Activated CD4-positive, alpha-beta T cell treated with anti-CD3 and anti-CD28 coated beads for 36 hours (primary cell): ENCODE measurements at regions of chr1 and their contacts with region 1.

Region 1: GRCh38 chr1:12434174-12434573 is 183.8 kb downstream of the DHRS3 start:
- DNase-seq: peak; percentile 82
- ATAC-seq: peak; percentile 48
- H3K4me3 Mint-ChIP-seq: no peak overlapping the region
- H3K27ac Mint-ChIP-seq: peak overlapping the region; percentile 14
- H3K4me1 Mint-ChIP-seq: peaks cover 63% of the 10 kb centered on the region
- H3K27me3 Mint-ChIP-seq: no peaks in the 10 kb centered on the region

Region 2: GRCh38 chr1:12161662-12162458 is 272.3 kb before region 1 on chr1:
- CTCF ChIA-PET with region 1: no interaction called
- POLR2A ChIA-PET with region 1: no interaction called
- intact Hi-C with region 1: loop called in 1 of 2 experiments (anchors 1 kb)
- DNase-seq: peak; percentile 89
- ATAC-seq: peak; percentile 84
- H3K4me3 Mint-ChIP-seq: peak overlapping the region; percentile 15
- H3K27ac Mint-ChIP-seq: peak overlapping the region; percentile 91
- H3K4me1 Mint-ChIP-seq: peaks cover 73% of the 10 kb centered on the region
- H3K27me3 Mint-ChIP-seq: no peaks in the 10 kb centered on the region

Region 3: DNA sequence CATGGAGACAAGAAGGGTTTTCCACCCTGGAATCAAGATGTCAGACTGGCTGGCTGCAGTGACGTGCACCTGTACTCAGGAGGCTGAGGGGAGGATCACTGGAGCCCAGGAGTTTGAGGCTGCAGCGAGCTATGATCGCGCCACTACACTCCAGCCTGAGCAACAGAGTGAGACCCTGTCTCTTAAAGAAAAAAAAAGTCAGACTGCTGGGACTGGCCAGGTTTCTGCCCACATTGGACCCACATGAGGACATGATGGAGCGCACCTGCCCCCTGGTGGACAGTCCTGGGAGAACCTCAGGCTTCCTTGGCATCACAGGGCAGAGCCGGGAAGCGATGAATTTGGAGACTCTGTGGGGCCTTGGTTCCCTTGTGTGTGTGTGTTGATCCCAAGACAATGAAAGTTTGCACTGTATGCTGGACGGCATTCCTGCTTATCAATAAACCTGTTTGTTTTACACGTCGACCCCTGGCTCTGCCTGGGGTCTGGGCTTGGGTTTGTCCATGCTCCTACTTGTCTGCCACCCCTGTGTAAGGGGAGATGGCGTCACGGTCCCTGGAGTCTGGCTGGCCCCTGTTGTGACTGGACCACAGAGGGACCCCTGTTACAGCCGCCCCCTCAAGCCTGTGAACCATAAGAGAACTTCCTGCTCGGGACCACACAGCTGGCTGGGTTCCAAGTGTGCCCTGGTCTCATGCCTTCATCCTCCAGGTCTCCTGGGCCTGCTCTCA is 225.2 kb before region 1 on chr1:
- CTCF ChIA-PET with region 1: no interaction called
- POLR2A ChIA-PET with region 1: no interaction called
- intact Hi-C with region 1: no loop called
- DNase-seq: peak; percentile 93
- ATAC-seq: peak; percentile 68
- H3K4me3 Mint-ChIP-seq: no peak overlapping the region
- H3K27ac Mint-ChIP-seq: peak overlapping the region; percentile 17
- H3K4me1 Mint-ChIP-seq: peaks cover 47% of the 10 kb centered on the region
- H3K27me3 Mint-ChIP-seq: no peaks in the 10 kb centered on the region

Region 4: DNA sequence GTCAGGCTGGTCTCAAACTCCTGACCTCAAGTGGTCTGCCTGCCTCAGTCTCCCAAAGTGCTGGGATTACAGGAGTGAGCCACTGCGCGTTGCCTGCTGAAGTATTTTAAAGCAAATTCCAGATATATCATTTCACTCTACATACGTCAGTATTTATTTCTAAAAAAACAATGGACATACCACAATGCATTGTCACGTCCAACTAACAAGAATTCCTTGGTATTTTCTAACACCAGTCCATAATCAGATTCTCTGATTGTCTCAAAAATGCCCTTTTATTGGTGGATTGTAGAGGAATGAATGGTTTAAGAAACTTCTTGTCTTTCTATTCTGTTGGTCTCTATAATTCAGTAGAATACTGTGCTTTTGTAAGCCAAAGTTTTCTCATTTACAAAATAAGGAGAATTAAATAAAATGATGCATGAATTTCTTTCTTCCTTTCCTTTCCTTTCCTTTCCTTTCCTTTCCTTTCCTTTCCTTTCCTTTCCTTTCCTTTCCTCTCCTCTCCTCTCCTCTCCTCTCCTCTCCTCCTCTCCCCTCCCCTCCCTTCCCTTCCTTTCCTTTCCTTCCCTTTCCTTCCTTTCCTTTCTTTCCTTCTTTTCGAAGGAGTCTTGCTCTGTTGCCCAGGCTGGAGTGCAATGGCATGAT is 148.6 kb before region 1 on chr1:
- CTCF ChIA-PET with region 1: no interaction called
- POLR2A ChIA-PET with region 1: no interaction called
- intact Hi-C with region 1: no loop called
- DNase-seq: no peak
- ATAC-seq: no peak
- H3K4me3 Mint-ChIP-seq: no peak overlapping the region
- H3K27ac Mint-ChIP-seq: no peak overlapping the region
- H3K4me1 Mint-ChIP-seq: peaks cover 10% of the 10 kb centered on the region
- H3K27me3 Mint-ChIP-seq: no peaks in the 10 kb centered on the region

Region 5: GRCh38 chr1:12407050-12407961 is 26.9 kb before region 1 on chr1:
- CTCF ChIA-PET with region 1: interaction called, 3 read pairs
- POLR2A ChIA-PET with region 1: no interaction called
- intact Hi-C with region 1: loop called (anchors 2 kb)
- DNase-seq: peak; percentile 23
- ATAC-seq: peak; percentile 78
- H3K4me3 Mint-ChIP-seq: no peak overlapping the region
- H3K27ac Mint-ChIP-seq: no peak overlapping the region
- H3K4me1 Mint-ChIP-seq: peaks cover 35% of the 10 kb centered on the region
- H3K27me3 Mint-ChIP-seq: no peaks in the 10 kb centered on the region

Region 6: DNA sequence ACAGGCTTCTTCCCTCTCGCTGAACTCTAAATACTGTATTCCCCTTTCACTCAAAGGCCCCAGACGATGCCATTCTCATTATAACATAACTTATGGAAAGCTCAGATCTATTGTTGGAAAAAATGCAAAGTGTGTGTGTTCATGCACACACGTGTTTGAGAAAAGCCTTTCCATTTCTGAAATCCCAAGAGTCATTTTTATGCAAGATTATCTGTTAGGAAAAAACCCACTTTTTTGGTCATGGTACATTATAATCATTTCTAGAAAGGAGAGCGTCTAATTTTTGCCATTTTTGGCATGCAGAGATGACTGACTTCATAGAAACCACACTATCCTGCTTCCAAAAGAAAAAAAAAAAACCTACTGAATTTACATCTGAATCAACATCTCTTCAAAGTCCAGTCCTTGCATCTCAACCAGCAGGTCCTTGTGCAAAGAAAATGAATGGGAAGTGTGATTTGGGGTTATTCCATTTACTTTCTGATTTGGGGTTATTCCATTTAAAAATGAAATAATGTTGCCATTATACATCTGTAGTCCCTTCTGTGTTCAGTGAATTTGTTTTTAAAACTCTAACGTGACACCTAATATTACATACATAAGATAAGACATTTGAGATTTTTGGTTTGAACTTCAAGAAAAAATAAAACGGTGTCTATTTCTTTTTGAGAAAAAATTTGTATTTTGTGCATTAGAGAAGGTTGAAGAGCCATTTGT is 33.6 kb after region 1 on chr1:
- CTCF ChIA-PET with region 1: interaction called, 4 read pairs
- POLR2A ChIA-PET with region 1: interaction called, 3 read pairs
- intact Hi-C with region 1: loop called in 1 of 2 experiments (anchors 1 kb)
- DNase-seq: no peak
- ATAC-seq: peak; percentile 73
- H3K4me3 Mint-ChIP-seq: no peak overlapping the region
- H3K27ac Mint-ChIP-seq: peak overlapping the region; percentile 89
- H3K4me1 Mint-ChIP-seq: peaks cover 51% of the 10 kb centered on the region
- H3K27me3 Mint-ChIP-seq: no peaks in the 10 kb centered on the region

Region 7: GRCh38 chr1:12511516-12512468 is 77.6 kb after region 1 on chr1:
- CTCF ChIA-PET with region 1: interaction called, 3 read pairs
- POLR2A ChIA-PET with region 1: interaction called, 3 read pairs
- intact Hi-C with region 1: loop called (anchors 1 to 2 kb)
- DNase-seq: no peak
- ATAC-seq: no peak
- H3K4me3 Mint-ChIP-seq: peak overlapping the region; percentile 58
- H3K27ac Mint-ChIP-seq: peak overlapping the region; percentile 99
- H3K4me1 Mint-ChIP-seq: peaks cover 54% of the 10 kb centered on the region
- H3K27me3 Mint-ChIP-seq: no peaks in the 10 kb centered on the region

Region 8: DNA sequence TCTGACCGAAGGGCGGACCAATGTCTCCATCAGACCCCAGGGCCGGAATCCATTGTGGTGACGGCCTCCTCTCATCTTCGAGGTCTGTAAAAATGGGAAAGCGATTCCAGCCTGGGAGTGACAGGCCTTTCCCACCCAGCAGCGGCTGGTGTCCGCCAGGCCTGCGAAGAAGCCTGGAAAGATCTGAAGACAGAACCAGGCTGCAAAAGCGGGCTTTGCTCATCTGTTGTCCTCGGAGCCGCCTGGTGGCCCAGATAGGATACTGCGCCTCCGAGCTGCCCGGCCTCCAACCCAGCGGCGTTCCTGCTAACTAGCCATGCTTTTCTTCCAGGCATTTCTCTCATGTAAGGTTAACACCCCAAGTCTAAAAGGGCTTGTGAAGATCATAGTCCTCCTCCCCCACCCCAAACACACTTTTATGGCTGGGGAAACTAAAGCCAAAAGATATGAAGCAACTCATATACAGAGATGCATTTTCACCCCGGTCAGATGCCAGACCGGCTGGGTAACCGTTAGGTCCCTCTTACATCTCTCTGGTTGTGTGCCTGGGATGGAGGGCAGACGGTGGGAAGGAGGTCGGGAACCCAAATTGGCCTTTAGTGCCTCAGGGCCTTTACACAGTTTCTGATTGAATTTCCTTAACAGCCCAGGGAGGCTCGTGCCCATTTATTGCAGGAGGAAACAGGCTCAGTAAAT is 185.8 kb after region 1 on chr1:
- CTCF ChIA-PET with region 1: interaction called, 9 read pairs
- POLR2A ChIA-PET with region 1: no interaction called
- intact Hi-C with region 1: loop called (anchors 1 kb)
- DNase-seq: peak; percentile 88
- ATAC-seq: peak; percentile 39
- H3K4me3 Mint-ChIP-seq: peak overlapping the region; percentile 95
- H3K27ac Mint-ChIP-seq: no peak overlapping the region
- H3K4me1 Mint-ChIP-seq: peaks cover 43% of the 10 kb centered on the region
- H3K27me3 Mint-ChIP-seq: no peaks in the 10 kb centered on the region